ENCODE measurements at regions of chr5 and their contacts with region 1.

Region 1: DNA sequence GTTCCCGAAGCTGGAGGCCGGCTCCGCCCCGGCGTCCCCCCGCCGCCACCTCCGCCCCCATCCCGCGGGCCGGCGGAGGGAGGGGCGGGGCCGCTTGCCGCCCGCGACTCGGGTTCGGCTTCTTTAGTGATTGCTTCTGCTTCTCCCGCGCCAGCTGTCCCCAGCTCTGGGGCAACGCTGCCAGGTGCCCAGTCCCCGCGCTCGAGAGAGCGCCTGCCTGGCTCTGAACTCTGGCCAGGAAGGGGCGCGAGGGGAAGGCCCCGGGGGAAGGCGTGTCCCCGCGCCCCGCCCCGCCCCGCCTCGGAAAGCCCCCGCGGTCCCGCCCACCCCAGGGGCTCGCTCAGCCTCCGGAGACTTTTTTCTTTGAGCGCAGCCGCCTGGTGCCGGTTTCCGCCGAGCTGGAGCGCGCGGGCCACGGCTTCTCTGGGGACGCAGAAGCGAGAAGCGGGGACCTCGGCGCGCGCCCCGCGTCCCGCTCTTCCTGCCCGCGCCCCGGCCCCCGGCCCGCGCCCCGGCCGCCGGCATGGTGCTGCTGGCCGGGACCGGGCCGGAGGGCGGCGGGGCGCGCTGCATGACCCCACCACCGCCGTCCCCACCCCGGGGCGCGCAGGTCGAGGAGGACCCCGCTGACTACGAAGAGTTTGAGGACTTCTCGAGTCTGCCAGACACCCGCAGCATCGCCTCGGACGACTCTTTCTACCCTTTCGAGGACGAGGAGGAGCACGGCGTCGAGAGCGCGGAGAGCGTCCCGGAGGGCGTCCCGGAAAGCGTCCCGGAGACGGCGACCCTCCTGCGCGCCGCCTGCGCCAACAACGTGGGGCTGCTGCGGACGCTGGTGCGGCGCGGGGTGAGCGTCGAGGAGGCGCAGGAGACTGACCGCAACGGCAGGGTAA is at the start of gene ANKRD33B:
- DNase-seq: no peak
- H3K4me3 ChIP-seq: peak within 1 kb of the TSS; percentile 70 to 75
- H3K27ac ChIP-seq: peak within 1 kb of the TSS; percentile 90
- H3K4me1 ChIP-seq: peaks cover 54% of the 10 kb centered on the region
- H3K27me3 ChIP-seq: no peaks in the 10 kb centered on the region
- CTCF ChIP-seq: no peak
- POLR2A ChIP-seq: peak in 1 of 2 donors; percentile 2
- total RNA-seq, gene ANKRD33B: 14.2 TPM

Region 2: GRCh38 chr5:10124287-10124686 is 439.9 kb before region 1 on chr5:
- intact Hi-C with region 1: no loop called
- DNase-seq: no peak
- H3K4me3 ChIP-seq: no peak overlapping the region
- H3K27ac ChIP-seq: no peak overlapping the region
- H3K4me1 ChIP-seq: no peaks in the 10 kb centered on the region
- H3K27me3 ChIP-seq: no peaks in the 10 kb centered on the region
- CTCF ChIP-seq: no peak
- POLR2A ChIP-seq: no peak

Region 3: DNA sequence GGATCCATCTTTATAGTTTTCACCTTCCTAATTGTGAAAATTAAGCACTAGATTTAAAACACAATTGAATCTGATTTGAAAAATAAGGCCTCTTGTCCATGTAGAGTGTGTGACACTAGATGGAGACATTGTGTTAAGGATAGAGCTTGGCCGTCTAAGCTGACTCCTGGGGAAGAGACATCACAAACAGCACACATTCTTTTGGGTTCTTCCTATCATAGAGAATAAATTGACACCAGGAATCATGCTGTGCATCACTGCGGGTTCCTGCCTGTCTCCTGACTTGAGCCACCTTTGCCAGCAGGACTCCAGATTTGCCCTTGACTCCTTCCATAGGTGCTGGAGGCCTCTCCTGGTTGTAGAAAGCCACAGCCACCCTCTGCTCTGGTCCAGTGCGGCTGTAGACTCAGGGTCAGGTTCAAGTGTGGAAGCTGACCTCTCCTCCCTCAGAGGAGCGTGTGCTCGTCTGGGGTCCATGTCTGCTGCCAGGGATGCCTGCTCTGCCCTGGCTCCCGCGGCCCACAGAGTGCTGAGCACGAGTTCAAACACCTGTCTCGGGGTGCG is 111.3 kb before region 1 on chr5:
- intact Hi-C with region 1: loop called (anchors 10 kb)
- DNase-seq: no peak
- H3K4me3 ChIP-seq: no peak overlapping the region
- H3K27ac ChIP-seq: no peak overlapping the region
- H3K4me1 ChIP-seq: peaks cover 11% of the 10 kb centered on the region
- H3K27me3 ChIP-seq: no peaks in the 10 kb centered on the region
- CTCF ChIP-seq: peak in 2 of 3 experiments; percentile 46 to 69
- POLR2A ChIP-seq: no peak

Region 4: GRCh38 chr5:10607666-10608073 is 43.5 kb after region 1 on chr5:
- intact Hi-C with region 1: loop called (anchors 5 kb)
- DNase-seq: no peak
- H3K4me3 ChIP-seq: no peak overlapping the region
- H3K27ac ChIP-seq: peak overlapping the region; percentile 72
- H3K4me1 ChIP-seq: peaks cover 21% of the 10 kb centered on the region
- H3K27me3 ChIP-seq: no peaks in the 10 kb centered on the region
- CTCF ChIP-seq: peak in 1 of 3 experiments; percentile 7
- POLR2A ChIP-seq: no peak